ENCODE measurements at regions of chr16 and their contacts with region 1.

Region 1: GRCh38 chr16:84116720-84117493 is at the start of gene MBTPS1:
- DNase-seq: peak; percentile 91 to 99
- H3K4me3 ChIP-seq: peak within 1 kb of the TSS; percentile 69 to 92 (median 84)
- H3K27ac ChIP-seq: peak within 1 kb of the TSS; percentile 64
- H3K4me1 ChIP-seq: peaks cover 0 to 2% (median 0%) of the 10 kb centered on the region in 4 experiments; a peak in 1 of 7 replicates
- H3K27me3 ChIP-seq: no peaks in the 10 kb centered on the region
- CTCF ChIP-seq: no peak; a peak in 1 of 4 replicates
- EP300 ChIP-seq: no peak
- POLR2A ChIP-seq: peak in 1 of 2 experiments; percentile 85; a peak in 2 of 3 replicates
- RAD21 ChIP-seq: no peak
- total RNA-seq, gene MBTPS1: 52.0 and 53.3 TPM in 2 replicates

Region 2: GRCh38 chr16:84103678-84104077 is 13.2 kb before region 1 on chr16:
- CTCF ChIA-PET with region 1: interaction called, 3 read pairs
- POLR2A ChIA-PET with region 1: interaction called, 19 read pairs
- DNase-seq: no peak
- H3K4me3 ChIP-seq: no peak overlapping the region
- H3K27ac ChIP-seq: no peak overlapping the region
- H3K4me1 ChIP-seq: no peaks in the 10 kb centered on the region
- H3K27me3 ChIP-seq: peaks cover 0 to 1% (median 0%) of the 10 kb centered on the region in 4 experiments; a peak in 1 of 7 replicates
- CTCF ChIP-seq: no peak
- EP300 ChIP-seq: no peak
- POLR2A ChIP-seq: no peak
- RAD21 ChIP-seq: no peak

Region 3: DNA sequence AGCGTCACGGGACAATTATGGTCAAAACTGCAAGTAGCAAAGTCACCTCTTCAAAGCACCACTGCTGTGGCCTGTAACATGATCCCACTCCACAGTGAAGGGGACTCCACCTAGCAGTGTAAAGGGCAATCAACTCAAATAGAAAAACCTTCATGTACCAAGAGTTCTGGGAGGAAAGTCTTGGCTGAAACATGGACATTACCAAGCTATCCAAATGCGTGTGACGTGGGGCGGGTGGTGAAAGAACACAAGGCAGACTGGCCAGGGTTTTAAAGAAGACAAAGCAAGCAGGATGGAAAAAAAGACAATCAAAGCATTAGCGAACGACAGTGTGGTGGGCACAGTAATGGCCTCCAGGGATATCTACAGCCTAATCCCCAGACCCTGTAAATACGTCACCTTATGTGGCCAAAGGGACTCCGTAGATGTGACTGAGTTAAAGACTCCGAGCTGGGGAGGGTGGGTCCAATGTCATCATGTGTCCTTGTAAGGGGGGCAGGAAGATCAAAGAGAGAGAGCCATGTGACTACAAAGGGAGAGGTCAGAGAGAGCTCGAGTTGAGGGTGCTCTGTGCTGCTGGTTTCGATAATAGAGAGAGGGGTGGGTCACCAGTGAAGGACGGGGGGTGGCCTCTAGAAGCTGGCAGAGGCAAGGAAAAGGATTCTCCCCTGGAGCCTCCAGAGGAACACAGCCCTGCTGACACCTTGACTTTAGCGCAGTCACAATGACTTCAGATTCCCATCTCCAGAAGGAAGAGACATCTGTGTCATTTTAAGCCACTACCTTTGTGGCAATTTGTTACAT is 22.1 kb after region 1 on chr16:
- CTCF ChIA-PET with region 1: interaction called, 44 read pairs
- POLR2A ChIA-PET with region 1: interaction called, 19 read pairs
- DNase-seq: no peak
- H3K4me3 ChIP-seq: peak overlapping the region in 2 of 4 experiments; percentile 1 to 16; a peak in 2 of 8 replicates
- H3K27ac ChIP-seq: no peak overlapping the region; the same call in 1 of the 2 replicates
- H3K4me1 ChIP-seq: peaks cover 11 to 28% (median 18%) of the 10 kb centered on the region in 4 experiments
- H3K27me3 ChIP-seq: no peaks in the 10 kb centered on the region
- CTCF ChIP-seq: no peak
- EP300 ChIP-seq: no peak
- POLR2A ChIP-seq: no peak
- RAD21 ChIP-seq: no peak